ENCODE measurements at regions of chr2 and their contacts with region 1.

Region 1: GRCh38 chr2:230987137-230988020 is 8.5 kb upstream of the SPATA3 start:
- DNase-seq: peak; percentile 38 to 98
- H3K4me3 ChIP-seq: peak overlapping the region in 3 of 4 experiments; percentile 30 to 52 (median 30); a peak in 6 of 8 replicates
- H3K27ac ChIP-seq: no peak overlapping the region
- H3K4me1 ChIP-seq: peaks cover 0 to 11% (median 5%) of the 10 kb centered on the region in 4 experiments; a peak in 5 of 7 replicates
- H3K27me3 ChIP-seq: peaks cover 0 to 4% (median 2%) of the 10 kb centered on the region in 4 experiments; a peak in 2 of 7 replicates
- CTCF ChIP-seq: peak; percentile 93 to 97 (median 95)
- EP300 ChIP-seq: no peak
- POLR2A ChIP-seq: no peak
- RAD21 ChIP-seq: peak; percentile 92 to 94

Region 2: DNA sequence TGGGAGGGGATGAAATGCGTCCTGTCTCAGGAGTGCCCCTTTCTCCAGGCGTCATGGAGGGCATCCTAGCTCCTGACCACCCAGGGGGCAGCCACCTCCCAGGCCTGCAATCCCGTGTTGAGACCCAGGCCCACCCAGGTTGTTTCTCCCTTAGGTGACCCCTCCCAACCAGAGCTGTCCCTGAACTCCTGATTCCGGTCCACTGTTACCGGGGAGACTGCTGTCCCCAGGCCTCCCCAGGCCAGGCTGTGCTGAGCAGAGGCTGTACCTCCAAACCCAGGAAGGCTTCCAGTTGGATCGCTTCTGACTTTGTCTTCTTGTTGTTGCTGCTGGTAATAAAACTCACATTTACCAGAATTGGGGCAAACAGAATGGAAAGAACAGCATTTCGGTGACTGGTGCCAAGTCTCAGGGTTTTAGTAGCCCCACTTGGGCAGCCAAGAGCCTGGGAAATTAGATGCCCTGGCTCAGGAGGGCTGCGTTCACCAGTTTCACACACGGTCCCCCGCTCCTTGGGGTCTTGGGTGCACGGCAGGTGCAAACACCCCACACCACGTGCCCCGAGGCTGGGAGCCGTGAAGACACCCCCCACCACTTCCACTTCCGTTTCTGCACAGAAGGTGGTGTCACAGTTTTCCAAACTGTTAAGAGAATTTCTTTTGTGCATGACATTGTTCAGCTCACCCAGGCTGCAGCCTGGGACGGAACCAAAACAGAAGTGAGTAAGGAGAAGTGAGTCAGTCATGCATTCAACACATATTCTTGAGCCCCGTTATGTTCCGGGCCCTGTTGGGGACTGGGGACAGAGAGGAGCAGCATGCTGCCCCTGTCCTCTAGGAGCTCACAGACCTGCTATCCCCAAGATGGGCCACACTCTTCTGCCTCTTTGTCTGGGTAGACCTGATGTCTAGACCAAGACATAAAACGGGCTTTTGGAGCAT is 93.3 kb before region 1 on chr2:
- CTCF ChIA-PET with region 1: interaction called, 136 read pairs
- POLR2A ChIA-PET with region 1: interaction called, 3 read pairs
- DNase-seq: no peak
- H3K4me3 ChIP-seq: no peak overlapping the region
- H3K27ac ChIP-seq: no peak overlapping the region
- H3K4me1 ChIP-seq: peaks cover 0 to 12% (median 2%) of the 10 kb centered on the region in 4 experiments; a peak in 2 of 7 replicates
- H3K27me3 ChIP-seq: no peaks in the 10 kb centered on the region
- CTCF ChIP-seq: no peak
- EP300 ChIP-seq: no peak
- POLR2A ChIP-seq: no peak
- RAD21 ChIP-seq: no peak

Region 3: DNA sequence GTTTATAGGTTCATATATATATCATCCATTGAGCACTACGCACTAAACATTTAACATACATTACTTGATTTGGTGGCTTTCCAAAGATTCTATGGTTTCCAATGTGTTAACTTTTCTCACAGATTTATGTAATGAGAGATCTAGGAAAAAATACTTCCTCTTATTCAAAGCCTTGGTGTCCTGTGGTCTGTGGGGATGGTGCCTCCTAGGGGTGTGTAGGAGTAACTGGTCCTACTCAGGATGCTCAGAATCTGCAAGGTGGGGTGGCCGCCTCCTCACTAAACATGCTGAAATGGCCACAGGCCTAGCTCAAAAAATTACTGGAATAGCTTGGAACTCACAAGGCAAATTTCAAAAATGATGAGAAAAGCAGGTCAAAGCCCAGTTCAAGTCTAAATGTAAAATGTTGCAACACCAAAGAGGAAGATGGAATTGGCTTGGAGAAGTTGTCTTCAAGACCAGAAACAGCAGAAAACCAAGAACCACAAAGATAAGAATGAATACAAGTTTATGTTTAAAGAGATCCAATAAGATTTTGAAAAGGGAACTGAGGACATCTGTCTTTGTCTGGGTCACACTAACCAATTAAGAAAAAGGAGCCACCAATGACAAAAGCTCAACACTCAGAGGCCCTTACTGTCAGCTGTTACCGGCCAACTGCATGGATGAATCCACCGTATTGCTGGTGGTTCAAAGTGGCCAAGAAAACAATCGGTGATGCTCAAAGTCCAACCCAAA is 73.8 kb before region 1 on chr2:
- CTCF ChIA-PET with region 1: interaction called, 12 read pairs
- POLR2A ChIA-PET with region 1: no interaction called
- DNase-seq: no peak
- H3K4me3 ChIP-seq: no peak overlapping the region
- H3K27ac ChIP-seq: no peak overlapping the region
- H3K4me1 ChIP-seq: peaks cover 0 to 5% (median 0%) of the 10 kb centered on the region in 4 experiments; a peak in 1 of 7 replicates
- H3K27me3 ChIP-seq: no peaks in the 10 kb centered on the region
- CTCF ChIP-seq: peak; percentile 74 to 75 (median 75)
- EP300 ChIP-seq: no peak
- POLR2A ChIP-seq: no peak
- RAD21 ChIP-seq: peak; percentile 76 to 83

Region 4: GRCh38 chr2:230942920-230943896 is 44.2 kb before region 1 on chr2:
- CTCF ChIA-PET with region 1: interaction called, 49 read pairs
- POLR2A ChIA-PET with region 1: interaction called, 3 read pairs
- DNase-seq: peak in 1 of 2 experiments; percentile 43
- H3K4me3 ChIP-seq: no peak overlapping the region
- H3K27ac ChIP-seq: no peak overlapping the region
- H3K4me1 ChIP-seq: no peaks in the 10 kb centered on the region; a peak in 1 of 7 replicates
- H3K27me3 ChIP-seq: no peaks in the 10 kb centered on the region
- CTCF ChIP-seq: no peak
- EP300 ChIP-seq: no peak
- POLR2A ChIP-seq: no peak
- RAD21 ChIP-seq: no peak

Region 5: GRCh38 chr2:231084565-231084964 is 97.2 kb after region 1 on chr2:
- CTCF ChIA-PET with region 1: no interaction called
- POLR2A ChIA-PET with region 1: no interaction called
- DNase-seq: no peak
- H3K4me3 ChIP-seq: no peak overlapping the region
- H3K27ac ChIP-seq: no peak overlapping the region
- H3K4me1 ChIP-seq: no peaks in the 10 kb centered on the region
- H3K27me3 ChIP-seq: no peaks in the 10 kb centered on the region
- CTCF ChIP-seq: no peak
- EP300 ChIP-seq: no peak
- POLR2A ChIP-seq: no peak
- RAD21 ChIP-seq: no peak

Measured in H1 (cell line).